Left cardiac atrium (tissue), 4 donors: ENCODE measurements at regions of chr10 and their contacts with region 1.

Region 1: GRCh38 chr10:124827474-124827873 is 25.9 kb downstream of the ABRAXAS2 start:
- DNase-seq: no peak
- ATAC-seq: no peak

Region 2: GRCh38 chr10:124530215-124530665 is 297.2 kb before region 1 on chr10:
- intact Hi-C with region 1: loop called in 1 of 2 experiments (anchors 5 kb)
- DNase-seq: peak; percentile 89
- ATAC-seq: peak; percentile 86 to 90

Region 3: GRCh38 chr10:124560377-124561105 is 266.9 kb before region 1 on chr10:
- intact Hi-C with region 1: no loop called
- DNase-seq: peak; percentile 70
- ATAC-seq: peak; percentile 92 to 93

Region 4: DNA sequence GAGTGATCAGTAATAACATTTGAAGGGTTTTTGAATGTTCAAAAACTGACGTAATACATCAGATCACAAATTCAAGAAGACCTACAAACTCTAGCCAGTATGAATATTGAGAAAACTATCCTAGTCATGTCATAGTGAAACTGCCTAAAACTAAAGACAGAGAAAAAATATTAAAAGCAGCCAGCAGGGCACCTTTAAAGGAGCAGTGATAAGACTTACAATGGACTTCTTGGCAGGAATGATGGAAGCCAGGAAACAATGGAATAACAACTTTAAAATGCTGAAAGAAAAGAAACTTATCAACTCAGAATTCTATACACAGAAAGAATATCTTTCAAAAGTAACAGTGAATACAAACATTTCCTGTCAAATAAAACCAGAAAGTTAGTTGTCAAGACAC is 411.2 kb after region 1 on chr10:
- intact Hi-C with region 1: no loop called
- DNase-seq: no peak
- ATAC-seq: no peak